Thyroid gland (tissue), 4 donors: ENCODE measurements at regions of chr6 and their contacts with region 1.

Region 1: GRCh38 chr6:43013843-43014433 is at the starts of genes KLHDC3 and MEA1:
- DNase-seq: peak; percentile 100
- H3K4me3 ChIP-seq: peak within 1 kb of the TSS; percentile 46 to 73 (median 61)
- H3K27ac ChIP-seq: peak within 1 kb of the TSS; percentile 42 to 69 (median 67)
- H3K4me1 ChIP-seq: peaks cover 28 to 39% of the 10 kb centered on the region in 2 donors
- H3K27me3 ChIP-seq: no peaks in the 10 kb centered on the region
- CTCF ChIP-seq: no peak
- POLR2A ChIP-seq: peak in 1 of 2 donors; percentile 66
- total RNA-seq, gene KLHDC3: 93.1 to 107 (median 97.7) TPM
- total RNA-seq, gene MEA1: 45.9 to 78.1 (median 61.7) TPM

Region 2: DNA sequence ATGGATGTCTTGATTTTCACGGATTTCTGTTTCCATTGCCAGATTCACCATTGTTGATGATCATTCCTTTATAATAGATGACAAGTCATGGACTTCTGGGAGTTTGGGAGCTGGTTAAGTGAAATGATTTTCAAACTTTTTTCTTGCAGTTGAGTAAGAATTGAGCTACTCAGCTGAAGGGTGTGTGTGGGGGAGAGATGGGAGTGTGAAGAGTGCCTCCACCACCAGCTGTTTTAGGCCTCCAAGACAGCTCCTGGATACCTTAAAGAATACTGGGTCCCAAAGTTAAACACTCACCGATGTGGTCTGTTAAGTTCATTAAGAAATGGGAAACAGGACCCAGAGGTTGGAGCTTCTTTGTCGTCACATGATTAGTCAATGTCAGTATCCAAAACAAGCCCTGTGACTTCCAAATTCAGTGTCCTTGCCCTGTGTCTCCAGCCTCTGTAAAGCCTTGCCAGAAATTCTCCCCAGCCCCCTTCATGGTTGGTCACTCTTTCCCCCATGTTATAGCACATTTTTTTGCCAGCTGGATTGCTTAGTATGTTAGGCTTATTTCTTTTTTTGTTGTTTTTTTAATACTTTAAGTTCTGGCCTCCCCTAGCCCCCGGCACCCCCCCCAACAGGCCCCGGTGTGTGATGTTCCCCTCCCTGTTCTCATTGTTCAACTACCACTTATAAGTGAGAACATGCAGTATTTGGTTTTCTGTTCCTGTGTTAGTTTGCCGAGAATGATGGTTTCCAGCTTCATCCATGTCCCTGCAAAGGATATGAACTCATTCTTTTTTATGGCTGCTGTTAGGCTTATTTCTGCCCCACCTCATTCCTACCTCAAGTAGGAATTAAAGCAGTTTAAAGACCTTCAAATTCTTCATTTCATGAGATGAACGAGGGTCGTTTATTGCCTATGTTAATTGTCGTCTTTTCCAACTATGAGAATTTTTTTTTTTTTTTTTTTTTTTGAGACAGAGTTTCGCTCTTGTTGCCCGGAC is 205.2 kb before region 1 on chr6:
- intact Hi-C with region 1: no loop called
- DNase-seq: peak; percentile 42 to 54
- H3K4me3 ChIP-seq: no peak overlapping the region
- H3K27ac ChIP-seq: peak overlapping the region; percentile 54 to 75 (median 70)
- H3K4me1 ChIP-seq: peaks cover 17 to 28% of the 10 kb centered on the region in 2 donors
- H3K27me3 ChIP-seq: no peaks in the 10 kb centered on the region
- CTCF ChIP-seq: no peak
- POLR2A ChIP-seq: no peak

Region 3: DNA sequence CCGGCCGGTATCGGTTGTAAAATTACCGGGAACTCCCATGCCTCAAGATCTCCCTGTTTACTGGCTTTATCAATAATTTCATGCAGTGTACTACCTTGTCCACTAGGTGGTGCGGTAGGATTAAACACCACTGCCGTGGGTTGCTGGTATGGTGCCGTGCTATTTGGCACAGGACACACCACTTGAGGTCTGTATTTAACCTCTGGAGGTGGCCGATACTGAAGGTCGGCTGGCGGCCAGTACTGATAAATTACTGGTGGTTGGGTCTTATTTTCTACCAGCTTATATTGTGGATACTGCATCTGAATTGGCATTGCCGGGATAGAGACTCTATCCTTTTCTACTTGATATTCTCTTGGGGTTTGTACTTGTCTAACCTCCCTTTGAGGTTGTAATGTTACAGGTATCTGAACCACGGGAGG is 112.4 kb before region 1 on chr6:
- intact Hi-C with region 1: loop called (anchors 10 kb)
- DNase-seq: peak; percentile 89 to 91
- H3K4me3 ChIP-seq: no peak overlapping the region
- H3K27ac ChIP-seq: no peak overlapping the region
- H3K4me1 ChIP-seq: peaks cover 0 to 7% of the 10 kb centered on the region in 2 donors
- H3K27me3 ChIP-seq: no peaks in the 10 kb centered on the region
- CTCF ChIP-seq: peak; percentile 79 to 96 (median 89)
- POLR2A ChIP-seq: no peak

Region 4: DNA sequence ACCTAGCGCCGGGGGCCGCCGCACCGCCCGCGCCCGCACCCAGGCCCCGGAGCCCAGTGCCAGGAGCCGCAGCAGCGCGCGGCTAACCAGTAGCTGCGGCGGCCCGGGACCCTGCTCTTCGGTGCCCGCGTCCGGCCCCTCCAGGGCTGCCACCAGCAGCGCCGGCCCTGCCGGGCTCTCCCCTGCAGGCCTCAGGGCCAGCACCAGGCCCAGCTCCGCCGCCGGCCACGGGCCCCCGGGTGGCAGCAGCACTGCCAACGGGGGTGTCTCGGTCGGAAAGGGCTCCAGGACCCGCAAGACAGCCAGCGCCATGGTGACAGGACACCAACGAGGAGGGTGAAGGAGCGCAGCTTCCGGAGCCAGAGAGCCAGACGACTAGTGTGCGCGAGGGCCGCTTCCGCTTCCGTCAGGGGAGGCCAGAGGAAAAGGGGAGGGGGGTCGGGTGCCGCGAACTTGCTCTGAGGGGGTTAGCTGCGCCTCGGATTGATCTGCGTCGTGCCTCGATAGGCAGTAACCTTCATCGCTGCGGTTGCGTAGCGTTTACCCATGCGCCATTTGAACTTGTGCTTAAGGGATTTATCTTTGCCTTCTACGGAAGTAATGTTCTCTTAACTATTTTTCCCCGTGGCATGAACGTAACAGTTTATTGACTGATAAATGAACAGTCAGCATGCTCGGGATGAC is 35.0 kb before region 1 on chr6 and contains the start of gene PEX6:
- intact Hi-C with region 1: loop called (anchors 5 kb)
- DNase-seq: peak; percentile 83 to 95
- H3K4me3 ChIP-seq: peak within 1 kb of the TSS; percentile 7 to 94 (median 83)
- H3K27ac ChIP-seq: peak within 1 kb of the TSS; percentile 71 to 79 (median 74)
- H3K4me1 ChIP-seq: peaks cover 18 to 26% of the 10 kb centered on the region in 2 donors
- H3K27me3 ChIP-seq: no peaks in the 10 kb centered on the region
- CTCF ChIP-seq: no peak
- POLR2A ChIP-seq: peak; percentile 37 to 77
- total RNA-seq, gene PEX6: 23.7 to 39.9 (median 28.4) TPM

Region 5: DNA sequence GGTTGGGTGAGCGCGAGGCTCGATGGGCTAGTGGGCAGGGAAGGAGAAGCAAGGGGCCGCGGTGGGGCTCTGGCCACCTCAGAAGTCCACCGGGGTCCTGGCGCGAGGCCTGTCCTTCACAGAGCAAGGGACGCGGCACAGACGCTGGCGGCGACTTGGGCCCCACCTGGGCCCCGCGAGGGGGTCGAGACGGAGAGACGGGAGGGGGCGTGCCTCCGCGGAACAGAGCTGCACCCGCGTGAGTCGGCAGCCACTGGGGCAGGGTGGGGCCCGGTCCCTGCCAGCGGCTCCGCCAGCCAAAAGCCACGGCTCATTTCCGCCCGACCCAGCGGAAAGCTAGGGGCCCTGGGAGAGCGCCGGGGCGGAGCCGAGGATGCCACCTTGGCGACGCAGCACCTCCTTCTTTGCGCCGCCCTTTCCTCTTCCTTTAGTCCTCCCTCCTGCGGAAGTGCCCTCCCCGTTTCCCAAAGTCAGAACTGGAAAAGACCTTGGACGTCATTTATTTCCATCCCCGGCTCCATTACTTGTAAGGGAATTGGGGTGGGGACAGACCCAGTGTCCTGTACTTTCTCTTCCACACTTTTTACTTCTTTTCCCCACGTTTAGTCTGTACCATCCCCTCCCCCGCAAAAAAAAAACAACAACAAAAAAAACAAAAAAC is 39.7 kb after region 1 on chr6 and contains the start of gene CUL7:
- intact Hi-C with region 1: loop called (anchors 5 kb)
- DNase-seq: peak; percentile 95 to 96
- H3K4me3 ChIP-seq: peak within 1 kb of the TSS; percentile 5 to 61 (median 61)
- H3K27ac ChIP-seq: peak within 1 kb of the TSS; percentile 86 to 91 (median 86)
- H3K4me1 ChIP-seq: peaks cover 20 to 27% of the 10 kb centered on the region in 2 donors
- H3K27me3 ChIP-seq: no peaks in the 10 kb centered on the region
- CTCF ChIP-seq: no peak
- POLR2A ChIP-seq: peak; percentile 42 to 91
- total RNA-seq, gene CUL7: 20.7 to 39.6 (median 28.6) TPM